Right ventricle myocardium inferior (tissue), 1 donor: ENCODE measurements at regions of chr2 and their contacts with region 1.

Region 1: DNA sequence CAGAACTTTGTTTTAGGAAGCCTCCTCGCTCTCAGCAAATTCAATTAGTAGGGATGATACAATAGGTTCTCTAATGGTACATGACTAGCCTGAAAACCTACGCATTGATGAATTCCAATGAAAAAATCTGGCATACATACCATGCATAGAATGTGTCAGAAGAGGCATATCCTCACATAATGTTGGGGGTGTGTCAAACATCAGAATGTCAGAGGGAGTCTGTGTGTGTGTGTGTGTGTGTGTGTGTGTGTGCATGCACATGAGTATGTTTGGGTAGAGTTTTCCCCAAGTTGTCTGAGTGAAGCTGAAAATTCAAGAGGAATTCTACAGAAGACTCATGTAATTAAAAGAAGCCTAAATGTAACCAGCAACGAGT is 78.5 kb downstream of the FIGN start:
- DNase-seq: no peak
- ATAC-seq: no peak

Region 2: GRCh38 chr2:163601377-163601776 is 55.9 kb before region 1 on chr2:
- intact Hi-C with region 1: loop called (anchors 5 kb)
- DNase-seq: no peak
- ATAC-seq: no peak

Region 3: GRCh38 chr2:163698857-163699256 is 41.6 kb after region 1 on chr2:
- intact Hi-C with region 1: loop called (anchors 5 kb)
- DNase-seq: no peak
- ATAC-seq: peak; percentile 55